PC-9 (cell line): ENCODE measurements at regions of chr3 and their contacts with region 1.

Region 1: DNA sequence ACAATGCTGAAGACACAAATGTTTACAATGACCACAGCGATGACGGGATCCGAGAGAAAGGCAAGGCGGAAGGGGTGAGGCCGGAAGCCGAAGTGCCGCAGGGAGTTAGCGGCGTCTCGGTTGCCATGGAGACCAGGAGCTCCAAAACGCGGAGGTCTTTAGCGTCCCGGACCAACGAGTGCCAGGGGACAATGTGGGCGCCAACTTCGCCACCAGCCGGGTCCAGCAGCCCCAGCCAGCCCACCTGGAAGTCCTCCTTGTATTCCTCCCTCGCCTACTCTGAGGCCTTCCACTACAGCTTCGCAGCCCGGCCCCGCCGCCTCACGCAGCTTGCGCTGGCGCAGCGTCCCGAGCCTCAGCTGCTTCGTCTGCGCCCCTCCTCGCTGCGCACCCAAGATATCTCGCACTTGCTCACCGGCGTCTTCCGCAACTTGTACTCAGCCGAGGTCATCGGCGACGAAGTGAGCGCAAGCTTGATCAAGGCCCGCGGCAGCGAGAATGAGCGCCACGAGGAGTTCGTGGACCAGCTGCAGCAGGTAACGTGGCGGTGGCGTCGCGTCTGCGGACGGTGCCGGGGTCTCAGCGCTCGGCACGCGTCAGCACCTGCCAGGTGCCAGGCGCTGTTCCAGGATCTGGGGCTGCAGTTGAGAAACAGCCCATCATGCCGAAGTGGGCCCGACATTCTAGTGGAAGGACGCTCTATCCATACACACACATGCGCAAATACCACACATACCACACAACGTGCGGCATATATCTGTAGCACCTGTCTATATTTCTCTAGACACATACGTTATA is at the start of gene DLEC1:
- DNase-seq: peak; percentile 54 to 63
- H3K4me3 ChIP-seq: peak within 1 kb of the TSS; percentile 49
- H3K27ac ChIP-seq: no peak within 1 kb of the TSS
- H3K4me1 ChIP-seq: peaks cover 5% of the 10 kb centered on the region; the same call in 1 of the 2 replicates
- H3K27me3 ChIP-seq: no peaks in the 10 kb centered on the region
- CTCF ChIP-seq: no peak
- total RNA-seq, gene DLEC1: 0.35 and 0.45 TPM in 2 replicates

Region 2: DNA sequence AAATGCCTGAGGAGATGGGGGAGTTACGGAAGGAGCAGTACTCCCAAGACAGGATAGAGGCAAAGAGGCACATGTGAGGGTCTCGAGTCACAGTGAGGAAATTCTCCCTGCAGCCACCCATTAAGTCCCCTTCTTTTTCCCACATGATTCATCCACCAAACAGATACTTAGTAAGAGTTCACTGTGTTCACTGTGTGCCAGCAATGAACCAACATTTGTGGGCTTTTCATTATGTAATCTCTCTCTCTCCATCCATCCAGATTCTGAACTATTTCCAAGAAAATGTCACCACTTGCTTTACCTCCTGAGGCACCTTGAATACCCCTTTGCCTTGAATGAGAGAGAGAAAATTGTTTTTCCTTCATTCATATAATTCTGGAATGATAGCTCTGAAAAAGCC is 840.3 kb before region 1 on chr3:
- CTCF ChIA-PET with region 1: no interaction called
- POLR2A ChIA-PET with region 1: interaction called, 19 read pairs
- intact Hi-C with region 1: no loop called
- DNase-seq: no peak
- H3K4me3 ChIP-seq: no peak overlapping the region
- H3K27ac ChIP-seq: no peak overlapping the region
- H3K4me1 ChIP-seq: peaks cover 9% of the 10 kb centered on the region
- H3K27me3 ChIP-seq: no peaks in the 10 kb centered on the region
- CTCF ChIP-seq: no peak

Region 3: DNA sequence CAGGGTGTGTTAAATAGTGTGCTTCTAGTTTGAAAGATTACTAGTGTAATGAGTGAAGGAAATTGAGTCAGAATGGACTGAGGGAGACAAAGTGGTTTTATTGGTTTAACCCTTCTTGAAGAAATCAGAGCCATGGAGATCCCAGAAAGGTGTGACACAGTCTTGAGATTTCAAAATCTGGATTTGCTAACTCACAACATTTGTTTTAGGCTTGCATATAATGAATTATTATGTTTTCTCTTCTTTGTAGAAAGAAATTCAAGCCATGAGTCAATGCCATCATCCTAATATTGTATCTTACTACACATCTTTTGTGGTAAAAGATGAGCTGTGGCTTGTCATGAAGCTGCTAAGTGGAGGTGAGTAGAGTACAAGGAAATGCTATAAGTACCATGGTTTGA is 151.2 kb after region 1 on chr3:
- CTCF ChIA-PET with region 1: no interaction called
- POLR2A ChIA-PET with region 1: interaction called, 19 read pairs
- intact Hi-C with region 1: no loop called
- DNase-seq: no peak
- H3K4me3 ChIP-seq: no peak overlapping the region
- H3K27ac ChIP-seq: no peak overlapping the region
- H3K4me1 ChIP-seq: no peaks in the 10 kb centered on the region
- H3K27me3 ChIP-seq: no peaks in the 10 kb centered on the region
- CTCF ChIP-seq: no peak

Region 4: DNA sequence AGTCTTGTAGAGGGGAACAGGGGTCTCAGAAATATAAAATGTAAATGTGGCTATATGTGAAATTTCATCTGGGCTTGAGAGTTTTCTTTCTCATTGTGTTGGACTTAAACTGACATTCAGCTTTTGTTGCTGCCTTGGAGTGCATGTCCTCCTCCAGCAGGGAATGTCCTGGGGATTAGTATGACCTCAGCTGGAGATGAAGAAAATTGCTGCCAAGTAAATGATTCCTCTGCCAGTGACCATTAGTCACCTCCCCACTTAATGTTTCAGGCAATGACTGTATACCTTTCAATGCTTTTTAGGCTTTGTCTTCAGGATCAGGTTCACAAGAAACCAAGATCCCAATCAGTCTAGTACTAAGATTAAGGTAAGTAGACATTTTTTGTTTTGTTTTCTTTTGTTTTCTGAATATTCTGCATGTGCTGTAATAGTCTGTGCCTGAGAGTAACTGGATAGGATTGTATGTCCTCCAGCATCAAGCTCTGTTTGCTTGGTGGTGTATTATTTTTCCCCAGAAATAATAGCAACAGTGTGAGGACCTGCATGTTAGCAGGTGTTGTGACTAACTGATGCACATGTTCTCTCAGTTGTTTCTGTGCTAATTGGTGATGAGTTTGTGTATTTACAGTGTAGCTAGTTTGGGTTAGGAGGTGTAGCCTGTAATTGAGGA is 208.2 kb after region 1 on chr3:
- CTCF ChIA-PET with region 1: no interaction called
- POLR2A ChIA-PET with region 1: no interaction called
- intact Hi-C with region 1: no loop called
- DNase-seq: peak; percentile 25 to 70
- H3K4me3 ChIP-seq: no peak overlapping the region
- H3K27ac ChIP-seq: peak overlapping the region; percentile 17; the same call in 1 of the 2 replicates
- H3K4me1 ChIP-seq: 0 out of 2 replicates have a peak, but pooled peaks cover 3% of the 10 kb centered on the region
- H3K27me3 ChIP-seq: no peaks in the 10 kb centered on the region
- CTCF ChIP-seq: no peak; the same call in 1 of the 2 replicates